ENCODE measurements at regions of chr6 and their contacts with region 1.

Region 1: GRCh38 chr6:34248727-34249551 is at the start of gene SMIM29:
- DNase-seq: peak; percentile 95 to 100 (median 97)
- ATAC-seq: peak; percentile 94
- H3K4me3 ChIP-seq: peak within 1 kb of the TSS; percentile 87
- H3K4me3 Mint-ChIP-seq: peak within 1 kb of the TSS; percentile 85 to 98 (median 94)
- H3K27ac ChIP-seq: peak within 1 kb of the TSS; percentile 95
- H3K27ac Mint-ChIP-seq: peak within 1 kb of the TSS; percentile 85 to 97 (median 95)
- H3K4me1 ChIP-seq: peaks cover 13 to 15% of the 10 kb centered on the region in 2 donors
- H3K4me1 Mint-ChIP-seq: peaks cover 13 to 42% (median 26%) of the 10 kb centered on the region in 7 donors
- H3K27me3 ChIP-seq: no peaks in the 10 kb centered on the region
- H3K27me3 Mint-ChIP-seq: peaks cover 0 to 10% (median 0%) of the 10 kb centered on the region in 5 donors
- total RNA-seq, gene SMIM29: 13.9 to 24.2 (median 22.5) TPM

Region 2: GRCh38 chr6:34196126-34196830 is 52.7 kb before region 1 on chr6:
- CTCF ChIA-PET with region 1: interaction called, 24 read pairs
- POLR2A ChIA-PET with region 1: interaction called, 11 read pairs
- intact Hi-C with region 1: loop called (anchors 1 kb)
- DNase-seq: peak; percentile 79 to 95 (median 88)
- ATAC-seq: peak; percentile 99
- H3K4me3 ChIP-seq: peak overlapping the region; percentile 90
- H3K4me3 Mint-ChIP-seq: peak overlapping the region; percentile 79 to 91 (median 87)
- H3K27ac ChIP-seq: peak overlapping the region; percentile 72
- H3K27ac Mint-ChIP-seq: peak overlapping the region in 5 of 9 donors; percentile 9 to 69 (median 61)
- H3K4me1 ChIP-seq: peaks cover 4 to 6% of the 10 kb centered on the region in 2 donors
- H3K4me1 Mint-ChIP-seq: peaks cover 0 to 11% (median 8%) of the 10 kb centered on the region in 7 donors
- H3K27me3 ChIP-seq: no peaks in the 10 kb centered on the region
- H3K27me3 Mint-ChIP-seq: peaks cover 0 to 13% (median 0%) of the 10 kb centered on the region in 5 donors

Region 3: GRCh38 chr6:34392497-34393190 is 143.7 kb after region 1 on chr6 and contains the start of gene NUDT3:
- CTCF ChIA-PET with region 1: interaction called, 7 read pairs
- POLR2A ChIA-PET with region 1: interaction called, 19 read pairs
- intact Hi-C with region 1: loop called (anchors 2 kb)
- DNase-seq: peak; percentile 88 to 98 (median 93)
- ATAC-seq: peak; percentile 93
- H3K4me3 ChIP-seq: peak within 1 kb of the TSS; percentile 92
- H3K4me3 Mint-ChIP-seq: peak within 1 kb of the TSS in 4 of 10 donors; percentile 79 to 99 (median 98)
- H3K27ac ChIP-seq: peak within 1 kb of the TSS; percentile 85
- H3K27ac Mint-ChIP-seq: peak within 1 kb of the TSS in 8 of 9 donors; percentile 89 to 95 (median 92)
- H3K4me1 ChIP-seq: peaks cover 11 to 16% of the 10 kb centered on the region in 2 donors
- H3K4me1 Mint-ChIP-seq: peaks cover 0 to 28% (median 23%) of the 10 kb centered on the region in 7 donors
- H3K27me3 ChIP-seq: no peaks in the 10 kb centered on the region
- H3K27me3 Mint-ChIP-seq: peaks cover 0 to 2% (median 0%) of the 10 kb centered on the region in 5 donors
- total RNA-seq, gene NUDT3: 16.2 to 29.7 (median 25.4) TPM

Region 4: GRCh38 chr6:34425498-34426410 is 176.8 kb after region 1 on chr6 and contains the start of gene RPS10:
- CTCF ChIA-PET with region 1: interaction called, 3 read pairs
- POLR2A ChIA-PET with region 1: interaction called, 20 read pairs
- intact Hi-C with region 1: loop called (anchors 1 kb)
- DNase-seq: peak; percentile 80 to 94 (median 88)
- ATAC-seq: peak; percentile 100
- H3K4me3 ChIP-seq: peak within 1 kb of the TSS; percentile 98
- H3K4me3 Mint-ChIP-seq: peak within 1 kb of the TSS; percentile 93 to 99 (median 97)
- H3K27ac ChIP-seq: peak within 1 kb of the TSS; percentile 93
- H3K27ac Mint-ChIP-seq: peak within 1 kb of the TSS; percentile 95 to 99 (median 98)
- H3K4me1 ChIP-seq: peaks cover 7 to 18% of the 10 kb centered on the region in 2 donors
- H3K4me1 Mint-ChIP-seq: peaks cover 13 to 43% (median 31%) of the 10 kb centered on the region in 7 donors
- H3K27me3 ChIP-seq: no peaks in the 10 kb centered on the region
- H3K27me3 Mint-ChIP-seq: peaks cover 0 to 3% (median 0%) of the 10 kb centered on the region in 5 donors
- total RNA-seq, gene RPS10: 1,466 to 3,151 (median 2,905) TPM

Region 5: DNA sequence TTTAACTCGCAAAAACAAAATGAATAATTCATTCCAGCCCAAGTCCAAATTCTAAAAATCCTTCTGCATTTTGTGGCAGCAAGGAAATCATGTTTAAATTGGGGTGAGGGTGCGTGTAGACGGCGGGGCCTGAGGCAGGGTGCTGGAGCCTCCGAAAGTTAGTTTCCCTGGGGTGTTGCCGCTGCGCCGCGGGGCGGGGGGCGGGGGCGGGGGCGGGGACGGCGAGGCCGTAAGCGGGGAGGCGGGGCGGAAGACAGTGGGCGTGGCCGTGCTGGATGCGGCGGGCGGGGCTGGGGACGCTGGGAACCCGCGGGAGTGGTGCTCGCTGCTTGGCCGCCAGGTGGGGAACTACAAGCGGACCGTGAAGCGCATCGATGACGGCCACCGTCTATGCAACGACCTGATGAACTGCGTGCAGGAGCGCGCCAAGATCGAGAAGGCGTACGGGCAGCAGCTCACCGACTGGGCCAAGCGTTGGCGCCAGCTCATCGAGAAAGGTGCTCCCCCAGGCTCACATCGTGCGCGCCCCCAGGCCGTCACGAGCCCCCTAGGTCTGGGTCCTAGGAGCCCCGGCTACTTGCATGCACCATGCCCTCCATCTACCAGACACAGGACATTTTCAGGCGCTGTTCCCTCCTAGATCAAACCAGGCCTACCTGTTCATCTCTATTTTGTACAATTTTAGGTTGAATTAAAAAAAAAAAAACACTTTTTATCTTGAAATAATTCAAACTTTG is 278.2 kb after region 1 on chr6:
- CTCF ChIA-PET with region 1: no interaction called
- POLR2A ChIA-PET with region 1: no interaction called
- intact Hi-C with region 1: loop called (anchors 1 to 5 kb)
- DNase-seq: peak; percentile 88 to 96 (median 94)
- ATAC-seq: peak; percentile 100
- H3K4me3 ChIP-seq: peak overlapping the region; percentile 33
- H3K4me3 Mint-ChIP-seq: peak overlapping the region; percentile 20 to 69 (median 46)
- H3K27ac ChIP-seq: peak overlapping the region; percentile 70
- H3K27ac Mint-ChIP-seq: peak overlapping the region; percentile 12 to 89 (median 72)
- H3K4me1 ChIP-seq: peaks cover 7 to 14% of the 10 kb centered on the region in 2 donors
- H3K4me1 Mint-ChIP-seq: peaks cover 4 to 12% (median 8%) of the 10 kb centered on the region in 7 donors
- H3K27me3 ChIP-seq: no peaks in the 10 kb centered on the region
- H3K27me3 Mint-ChIP-seq: peaks cover 0 to 2% (median 0%) of the 10 kb centered on the region in 5 donors

Region 6: GRCh38 chr6:34610819-34611477 is 362.0 kb after region 1 on chr6:
- CTCF ChIA-PET with region 1: interaction called, 8 read pairs
- POLR2A ChIA-PET with region 1: interaction called, 9 read pairs
- intact Hi-C with region 1: loop called (anchors 1 kb)
- DNase-seq: no peak
- ATAC-seq: no peak
- H3K4me3 ChIP-seq: no peak overlapping the region
- H3K4me3 Mint-ChIP-seq: no peak overlapping the region
- H3K27ac ChIP-seq: no peak overlapping the region
- H3K27ac Mint-ChIP-seq: peak overlapping the region in 1 of 9 donors; percentile 63
- H3K4me1 ChIP-seq: no peaks in the 10 kb centered on the region
- H3K4me1 Mint-ChIP-seq: peaks cover 2 to 17% (median 13%) of the 10 kb centered on the region in 7 donors
- H3K27me3 ChIP-seq: no peaks in the 10 kb centered on the region
- H3K27me3 Mint-ChIP-seq: no peaks in the 10 kb centered on the region